Naive thymus-derived CD4-positive, alpha-beta T cell (primary cell): ENCODE measurements at regions of chr10 and their contacts with region 1.

Region 1: DNA sequence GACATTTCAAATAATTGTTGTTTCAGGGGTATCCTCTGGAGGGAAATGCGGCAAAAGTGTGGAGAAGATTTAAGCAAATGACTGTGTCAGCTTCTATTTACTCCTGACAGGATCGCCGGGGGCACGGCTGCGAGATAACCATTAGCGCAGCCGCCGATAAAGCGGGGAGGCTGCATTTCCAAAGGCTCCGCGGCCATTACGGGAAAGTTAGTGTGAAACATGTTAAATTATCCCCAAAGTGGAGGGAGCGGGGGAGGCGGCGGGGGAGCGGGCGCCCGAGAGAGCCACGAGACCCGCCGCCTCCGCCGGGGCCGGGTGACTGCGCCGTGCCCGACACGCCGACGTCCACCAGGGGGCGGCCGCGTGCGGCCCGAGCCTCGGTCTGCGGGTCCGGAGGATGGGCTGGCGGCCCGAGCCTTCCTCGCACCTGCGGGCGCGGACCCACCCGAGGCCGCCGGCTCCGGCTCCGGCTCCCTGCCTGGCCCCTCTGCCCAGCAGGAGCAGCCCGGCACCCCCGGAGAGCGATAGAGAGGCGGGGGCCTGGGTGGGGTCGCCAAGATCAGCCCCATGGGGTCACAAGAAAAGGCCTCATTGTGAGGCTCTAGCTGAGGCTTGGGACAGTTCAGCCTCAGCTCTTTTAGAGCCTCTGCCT is 74.4 kb upstream of the PAX2 start:
- DNase-seq: peak in 7 of 9 donors; percentile 31 to 83 (median 38)
- ATAC-seq: peak; percentile 75
- H3K4me3 ChIP-seq: no peak overlapping the region
- H3K4me3 Mint-ChIP-seq: peak overlapping the region in 7 of 10 donors; percentile 16 to 61 (median 36)
- H3K27ac ChIP-seq: no peak overlapping the region
- H3K27ac Mint-ChIP-seq: no peak overlapping the region
- H3K4me1 ChIP-seq: no peaks in the 10 kb centered on the region
- H3K4me1 Mint-ChIP-seq: peaks cover 4 to 13% (median 8%) of the 10 kb centered on the region in 7 donors
- H3K27me3 ChIP-seq: peaks cover 0 to 15% of the 10 kb centered on the region in 2 donors
- H3K27me3 Mint-ChIP-seq: peaks cover 61 to 72% (median 69%) of the 10 kb centered on the region in 5 donors

Region 2: DNA sequence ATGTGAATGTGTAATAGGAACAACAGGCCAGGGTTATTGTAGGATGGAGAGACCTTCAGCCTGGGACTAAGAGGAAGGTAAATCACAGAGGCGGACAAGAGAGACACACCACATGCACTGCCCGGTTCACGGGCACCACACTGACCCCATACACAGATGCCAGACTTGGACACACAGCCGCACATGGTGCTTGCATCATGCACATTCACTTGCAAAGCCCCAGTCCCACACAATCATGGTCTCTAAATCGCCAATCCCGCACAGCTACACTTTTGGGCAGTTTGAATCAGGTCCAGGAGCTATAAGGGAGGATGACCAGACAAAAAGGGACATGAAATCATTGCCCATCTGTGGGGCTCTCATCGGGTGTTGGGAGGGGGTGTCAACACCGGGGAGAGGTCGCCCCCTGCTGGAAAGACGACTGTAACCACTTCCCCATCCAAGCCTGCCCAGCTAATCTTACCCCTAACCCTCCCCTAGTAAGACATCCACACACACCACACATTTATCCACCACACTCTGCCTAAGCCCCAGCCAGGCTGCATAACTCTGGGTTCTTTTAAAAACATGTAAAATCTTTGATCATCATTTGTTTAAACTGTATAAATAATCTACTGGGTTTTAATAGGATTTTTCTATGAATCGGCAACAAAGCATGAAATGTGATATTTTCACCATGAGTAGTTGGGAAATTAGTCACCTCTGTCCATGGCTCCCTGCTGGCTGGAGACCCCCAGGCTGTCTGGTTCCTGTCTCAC is 201.3 kb after region 1 on chr10:
- CTCF ChIA-PET with region 1: no interaction called
- POLR2A ChIA-PET with region 1: no interaction called
- intact Hi-C with region 1: loop called in 1 of 2 experiments (anchors 5 kb)
- DNase-seq: peak in 7 of 9 donors; percentile 18 to 64 (median 27)
- ATAC-seq: peak; percentile 44
- H3K4me3 ChIP-seq: no peak overlapping the region
- H3K4me3 Mint-ChIP-seq: no peak overlapping the region
- H3K27ac ChIP-seq: no peak overlapping the region
- H3K27ac Mint-ChIP-seq: no peak overlapping the region
- H3K4me1 ChIP-seq: no peaks in the 10 kb centered on the region
- H3K4me1 Mint-ChIP-seq: peaks cover 0 to 5% (median 0%) of the 10 kb centered on the region in 7 donors
- H3K27me3 ChIP-seq: no peaks in the 10 kb centered on the region
- H3K27me3 Mint-ChIP-seq: peaks cover 2 to 19% (median 16%) of the 10 kb centered on the region in 5 donors

Region 3: DNA sequence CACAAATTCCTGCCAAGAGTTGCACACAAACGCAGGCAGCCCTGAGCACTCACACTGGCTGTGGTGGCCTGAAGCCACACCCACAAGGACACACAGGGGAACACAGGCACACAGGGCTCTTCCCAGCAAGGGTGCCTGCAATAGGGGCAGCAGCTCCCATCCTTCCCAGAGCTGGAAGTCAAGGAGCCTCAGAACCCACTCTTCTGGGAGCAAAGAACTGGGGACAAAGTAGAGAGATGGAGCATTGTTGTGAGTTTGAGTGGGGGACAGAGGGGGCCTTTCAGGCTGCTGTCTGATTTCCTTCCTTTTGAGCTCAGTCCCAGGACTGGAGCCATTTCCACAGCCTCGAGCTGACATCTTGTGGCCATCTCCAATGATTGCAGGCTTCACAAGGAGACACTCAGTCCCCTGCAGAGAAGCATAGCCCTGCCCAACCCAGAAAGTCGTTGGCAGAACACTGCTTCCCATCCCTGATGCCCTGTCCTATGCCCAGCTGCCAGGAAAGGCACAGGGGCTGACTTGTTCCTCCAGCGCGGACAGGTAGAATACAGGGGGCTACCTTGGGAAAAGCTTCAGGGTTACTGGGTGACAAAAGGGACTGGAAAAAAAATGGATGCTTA is 207.4 kb after region 1 on chr10:
- CTCF ChIA-PET with region 1: no interaction called
- POLR2A ChIA-PET with region 1: no interaction called
- intact Hi-C with region 1: loop called (anchors 2 to 5 kb)
- DNase-seq: peak in 2 of 9 donors; percentile 7 to 26
- ATAC-seq: no peak
- H3K4me3 ChIP-seq: no peak overlapping the region
- H3K4me3 Mint-ChIP-seq: no peak overlapping the region
- H3K27ac ChIP-seq: no peak overlapping the region
- H3K27ac Mint-ChIP-seq: peak overlapping the region in 1 of 9 donors; percentile 56
- H3K4me1 ChIP-seq: no peaks in the 10 kb centered on the region
- H3K4me1 Mint-ChIP-seq: peaks cover 0 to 6% (median 0%) of the 10 kb centered on the region in 7 donors
- H3K27me3 ChIP-seq: no peaks in the 10 kb centered on the region
- H3K27me3 Mint-ChIP-seq: peaks cover 0 to 23% (median 9%) of the 10 kb centered on the region in 5 donors

Region 4: GRCh38 chr10:101012525-101013364 is 341.8 kb after region 1 on chr10:
- CTCF ChIA-PET with region 1: no interaction called
- POLR2A ChIA-PET with region 1: no interaction called
- intact Hi-C with region 1: loop called (anchors 2 to 5 kb)
- DNase-seq: peak; percentile 46 to 76 (median 63)
- ATAC-seq: peak; percentile 91
- H3K4me3 ChIP-seq: no peak overlapping the region
- H3K4me3 Mint-ChIP-seq: peak overlapping the region in 1 of 10 donors; percentile 24
- H3K27ac ChIP-seq: no peak overlapping the region
- H3K27ac Mint-ChIP-seq: peak overlapping the region in 3 of 9 donors; percentile 8 to 75 (median 41)
- H3K4me1 ChIP-seq: peaks cover 0 to 5% of the 10 kb centered on the region in 2 donors
- H3K4me1 Mint-ChIP-seq: peaks cover 9 to 21% (median 17%) of the 10 kb centered on the region in 7 donors
- H3K27me3 ChIP-seq: no peaks in the 10 kb centered on the region
- H3K27me3 Mint-ChIP-seq: peaks cover 22 to 39% (median 30%) of the 10 kb centered on the region in 5 donors

Region 5: DNA sequence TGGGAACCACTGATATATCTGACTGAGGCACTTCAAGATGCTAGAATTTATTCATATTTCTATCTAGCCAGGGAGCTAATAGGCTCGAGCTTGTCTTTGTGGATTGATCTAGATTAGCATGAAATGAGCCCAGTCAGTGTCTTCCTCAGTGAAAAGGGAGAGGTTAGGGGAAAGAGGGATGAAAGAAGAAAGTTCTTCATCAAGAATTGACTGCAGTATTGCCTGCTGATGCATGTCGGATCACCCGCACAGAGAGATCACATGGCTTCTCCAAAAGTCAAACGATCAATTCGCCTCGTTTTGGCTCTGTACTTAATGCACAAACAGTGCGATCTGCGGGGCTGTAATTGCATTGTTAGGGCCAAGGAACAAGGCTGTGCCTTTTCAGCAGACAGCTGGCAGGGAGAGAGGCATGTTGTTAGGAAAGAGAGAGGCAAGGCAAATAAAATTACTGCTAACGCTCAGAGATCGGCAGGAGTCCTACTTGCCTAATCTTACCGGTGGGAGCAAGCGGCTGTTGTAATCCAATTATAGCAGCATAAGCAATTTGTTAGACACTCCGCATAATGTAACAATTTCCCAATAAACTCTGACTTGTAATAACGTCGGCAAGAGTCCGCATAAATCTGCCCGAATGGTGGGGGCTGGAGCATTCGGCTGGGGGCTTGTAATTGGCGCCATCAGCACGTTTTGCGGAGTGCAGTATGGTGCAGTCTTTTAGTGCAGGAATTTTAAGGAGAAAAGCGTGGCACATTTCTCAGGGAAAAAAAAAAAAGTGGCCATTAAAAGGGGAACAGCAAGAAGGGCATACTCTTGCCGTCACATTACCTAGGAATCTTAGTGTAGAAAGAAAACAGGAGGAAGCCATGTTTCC is 815.0 kb after region 1 on chr10:
- CTCF ChIA-PET with region 1: no interaction called
- POLR2A ChIA-PET with region 1: no interaction called
- intact Hi-C with region 1: no loop called
- DNase-seq: no peak
- ATAC-seq: no peak
- H3K4me3 ChIP-seq: no peak overlapping the region
- H3K4me3 Mint-ChIP-seq: no peak overlapping the region
- H3K27ac ChIP-seq: no peak overlapping the region
- H3K27ac Mint-ChIP-seq: peak overlapping the region in 1 of 9 donors; percentile 43
- H3K4me1 ChIP-seq: no peaks in the 10 kb centered on the region
- H3K4me1 Mint-ChIP-seq: peaks cover 3 to 22% (median 17%) of the 10 kb centered on the region in 7 donors
- H3K27me3 ChIP-seq: no peaks in the 10 kb centered on the region
- H3K27me3 Mint-ChIP-seq: peaks cover 0 to 8% (median 0%) of the 10 kb centered on the region in 5 donors